Sigmoid colon (tissue), 7 donors: ENCODE measurements at regions of chr2 and their contacts with region 1.

Region 1: GRCh38 chr2:98835831-98836385 is 100.1 kb downstream of the CRACDL start:
- DNase-seq: no peak
- H3K4me3 ChIP-seq: no peak overlapping the region
- H3K27ac ChIP-seq: no peak overlapping the region
- H3K4me1 ChIP-seq: no peaks in the 10 kb centered on the region
- H3K27me3 ChIP-seq: no peaks in the 10 kb centered on the region
- CTCF ChIP-seq: no peak
- EP300 ChIP-seq: no peak
- POLR2A ChIP-seq: no peak

Region 2: GRCh38 chr2:98608116-98608999 is 227.6 kb before region 1 on chr2 and contains the starts of genes COA5 and UNC50:
- intact Hi-C with region 1: loop called (anchors 1 kb)
- DNase-seq: peak; percentile 94
- H3K4me3 ChIP-seq: peak within 1 kb of the TSS; percentile 56 to 95 (median 93)
- H3K27ac ChIP-seq: peak within 1 kb of the TSS; percentile 93 to 97 (median 94)
- H3K4me1 ChIP-seq: peaks cover 0 to 60% (median 48%) of the 10 kb centered on the region in 4 donors
- H3K27me3 ChIP-seq: no peaks in the 10 kb centered on the region
- CTCF ChIP-seq: no peak
- EP300 ChIP-seq: peak in 1 of 4 donors; percentile 36
- POLR2A ChIP-seq: peak; percentile 71 to 83
- total RNA-seq, gene COA5: 35.5 to 53.8 (median 43.4) TPM
- total RNA-seq, gene UNC50: 39.4 to 61.0 (median 52.7) TPM

Region 3: GRCh38 chr2:98649135-98649991 is 186.5 kb before region 1 on chr2:
- intact Hi-C with region 1: loop called (anchors 1 kb)
- DNase-seq: peak; percentile 86
- H3K4me3 ChIP-seq: no peak overlapping the region
- H3K27ac ChIP-seq: no peak overlapping the region
- H3K4me1 ChIP-seq: no peaks in the 10 kb centered on the region
- H3K27me3 ChIP-seq: no peaks in the 10 kb centered on the region
- CTCF ChIP-seq: peak; percentile 92 to 99 (median 98)
- EP300 ChIP-seq: no peak
- POLR2A ChIP-seq: no peak

Region 4: GRCh38 chr2:98749066-98749450 is 86.8 kb before region 1 on chr2:
- intact Hi-C with region 1: no loop called
- DNase-seq: no peak
- H3K4me3 ChIP-seq: no peak overlapping the region
- H3K27ac ChIP-seq: peak overlapping the region in 1 of 4 donors; percentile 38
- H3K4me1 ChIP-seq: no peaks in the 10 kb centered on the region
- H3K27me3 ChIP-seq: no peaks in the 10 kb centered on the region
- CTCF ChIP-seq: no peak
- EP300 ChIP-seq: no peak
- POLR2A ChIP-seq: no peak

Region 5: GRCh38 chr2:98909317-98910211 is 73.7 kb after region 1 on chr2:
- intact Hi-C with region 1: no loop called
- DNase-seq: no peak
- H3K4me3 ChIP-seq: no peak overlapping the region
- H3K27ac ChIP-seq: no peak overlapping the region
- H3K4me1 ChIP-seq: peaks cover 0 to 19% (median 9%) of the 10 kb centered on the region in 4 donors
- H3K27me3 ChIP-seq: no peaks in the 10 kb centered on the region
- CTCF ChIP-seq: no peak
- EP300 ChIP-seq: no peak
- POLR2A ChIP-seq: no peak

Region 6: DNA sequence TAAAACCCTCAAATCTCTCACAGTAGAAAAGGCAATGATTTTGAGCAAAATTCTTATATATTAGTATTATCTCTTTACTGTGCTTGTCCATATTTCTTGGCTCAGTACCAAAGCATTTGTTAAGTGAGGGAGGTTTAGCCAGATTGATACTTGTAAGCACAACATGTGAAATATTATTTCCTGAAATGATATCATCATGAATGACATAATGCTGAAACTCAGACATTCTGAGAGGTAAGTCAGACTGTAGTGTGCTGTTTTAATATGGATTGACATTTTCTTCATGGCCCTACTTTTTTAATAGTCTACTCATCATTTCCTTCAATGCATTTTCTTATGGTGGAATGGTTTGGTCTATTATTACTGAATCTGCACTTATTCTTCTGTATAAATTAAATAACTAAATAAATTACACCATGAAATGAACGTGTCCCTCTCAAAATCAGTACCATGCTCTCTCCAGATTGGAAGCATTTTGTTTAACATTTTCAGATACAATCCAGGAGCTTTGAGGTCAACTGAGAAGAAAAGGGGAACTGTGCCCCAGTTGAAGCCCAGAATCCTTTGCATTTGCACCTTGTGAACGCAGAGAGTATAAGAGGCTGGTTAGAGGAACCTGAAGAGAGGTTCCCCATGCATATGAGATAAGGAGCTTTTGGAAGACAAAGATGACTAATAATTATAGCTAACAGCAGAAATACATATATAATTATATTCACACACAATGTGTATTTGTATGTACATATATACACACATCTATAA is 150.2 kb after region 1 on chr2:
- intact Hi-C with region 1: no loop called
- DNase-seq: no peak
- H3K4me3 ChIP-seq: no peak overlapping the region
- H3K27ac ChIP-seq: no peak overlapping the region
- H3K4me1 ChIP-seq: no peaks in the 10 kb centered on the region
- H3K27me3 ChIP-seq: no peaks in the 10 kb centered on the region
- CTCF ChIP-seq: no peak
- EP300 ChIP-seq: no peak
- POLR2A ChIP-seq: no peak